ENCODE measurements at regions of chr7 and their contacts with region 1.

Region 1: DNA sequence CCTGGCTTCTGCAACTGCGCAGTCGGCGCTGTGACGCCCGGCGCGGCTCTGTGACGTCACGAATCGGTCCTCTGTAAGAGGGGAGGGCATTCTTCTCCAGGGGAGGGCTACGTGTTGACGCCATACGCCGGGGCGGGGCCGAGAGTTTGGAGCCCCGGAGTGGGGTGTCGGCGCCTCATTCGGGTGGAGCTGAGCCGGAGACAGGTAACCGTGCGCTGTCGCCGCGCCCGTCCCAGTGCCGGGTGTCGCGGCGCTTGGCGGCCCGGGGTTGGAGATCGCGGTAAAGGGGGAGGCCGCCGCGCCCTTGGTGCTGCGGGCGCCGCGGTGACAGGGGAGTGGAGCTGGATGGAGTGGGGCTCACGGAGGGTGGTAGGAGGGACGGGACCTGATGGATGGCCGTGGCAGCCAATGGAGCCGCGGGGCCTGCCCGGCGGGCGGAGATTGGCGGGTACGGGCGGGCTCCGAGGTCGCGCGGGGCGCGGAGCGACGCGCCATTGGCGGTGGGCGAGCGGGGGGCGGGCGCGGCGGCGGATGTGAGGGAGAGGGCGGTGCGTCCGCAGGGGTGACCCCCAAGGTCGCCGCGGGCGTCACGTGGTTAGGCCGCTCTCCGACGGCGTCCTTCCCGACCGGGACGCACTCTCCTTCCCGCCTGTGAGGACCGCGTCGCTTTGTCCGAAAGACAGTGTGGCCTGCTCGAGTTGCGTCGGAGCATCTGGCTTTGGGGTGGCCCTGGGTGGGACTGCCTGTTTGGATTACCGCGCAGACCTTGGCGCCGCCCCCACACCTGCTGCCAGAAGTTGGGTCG is at the start of gene OGDH:
- DNase-seq: peak; percentile 98 to 100 (median 99)
- ATAC-seq: peak; percentile 92
- H3K4me3 ChIP-seq: peak within 1 kb of the TSS; percentile 87 to 90
- H3K4me3 Mint-ChIP-seq: peak within 1 kb of the TSS; percentile 99
- H3K27ac ChIP-seq: peak within 1 kb of the TSS; percentile 96 to 98
- H3K27ac Mint-ChIP-seq: peak within 1 kb of the TSS; percentile 100
- H3K4me1 ChIP-seq: peaks cover 30% of the 10 kb centered on the region
- H3K4me1 Mint-ChIP-seq: peaks cover 34% of the 10 kb centered on the region
- H3K27me3 ChIP-seq: no peaks in the 10 kb centered on the region
- H3K27me3 Mint-ChIP-seq: no peaks in the 10 kb centered on the region
- CTCF ChIP-seq: no peak
- total RNA-seq, gene OGDH: 36.8 to 39.6 TPM

Region 2: DNA sequence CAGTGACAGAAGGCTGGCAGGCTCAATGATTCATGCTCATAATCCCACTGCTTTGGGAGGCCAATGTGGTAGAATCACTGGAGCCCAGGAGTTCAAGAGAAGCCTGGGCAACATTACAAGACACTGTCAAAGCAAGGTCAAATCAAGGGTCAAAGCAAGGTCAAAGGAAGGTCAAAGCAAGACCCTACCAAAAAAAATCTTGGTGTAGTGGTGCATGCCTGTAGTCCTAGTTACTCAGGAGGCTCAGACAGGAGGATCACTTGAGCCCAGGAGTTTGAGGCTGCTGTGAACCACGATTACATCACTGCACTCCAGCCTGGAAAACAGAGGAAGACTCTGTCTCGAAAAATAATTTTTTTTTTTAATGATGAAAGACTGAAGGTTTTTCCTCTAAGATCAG is 51.3 kb before region 1 on chr7:
- CTCF ChIA-PET with region 1: no interaction called
- POLR2A ChIA-PET with region 1: no interaction called
- intact Hi-C with region 1: no loop called
- DNase-seq: no peak
- ATAC-seq: no peak
- H3K4me3 ChIP-seq: no peak overlapping the region
- H3K4me3 Mint-ChIP-seq: no peak overlapping the region
- H3K27ac ChIP-seq: no peak overlapping the region
- H3K27ac Mint-ChIP-seq: no peak overlapping the region
- H3K4me1 ChIP-seq: no peaks in the 10 kb centered on the region
- H3K4me1 Mint-ChIP-seq: no peaks in the 10 kb centered on the region
- H3K27me3 ChIP-seq: no peaks in the 10 kb centered on the region
- H3K27me3 Mint-ChIP-seq: peaks cover 2% of the 10 kb centered on the region
- CTCF ChIP-seq: no peak

Region 3: DNA sequence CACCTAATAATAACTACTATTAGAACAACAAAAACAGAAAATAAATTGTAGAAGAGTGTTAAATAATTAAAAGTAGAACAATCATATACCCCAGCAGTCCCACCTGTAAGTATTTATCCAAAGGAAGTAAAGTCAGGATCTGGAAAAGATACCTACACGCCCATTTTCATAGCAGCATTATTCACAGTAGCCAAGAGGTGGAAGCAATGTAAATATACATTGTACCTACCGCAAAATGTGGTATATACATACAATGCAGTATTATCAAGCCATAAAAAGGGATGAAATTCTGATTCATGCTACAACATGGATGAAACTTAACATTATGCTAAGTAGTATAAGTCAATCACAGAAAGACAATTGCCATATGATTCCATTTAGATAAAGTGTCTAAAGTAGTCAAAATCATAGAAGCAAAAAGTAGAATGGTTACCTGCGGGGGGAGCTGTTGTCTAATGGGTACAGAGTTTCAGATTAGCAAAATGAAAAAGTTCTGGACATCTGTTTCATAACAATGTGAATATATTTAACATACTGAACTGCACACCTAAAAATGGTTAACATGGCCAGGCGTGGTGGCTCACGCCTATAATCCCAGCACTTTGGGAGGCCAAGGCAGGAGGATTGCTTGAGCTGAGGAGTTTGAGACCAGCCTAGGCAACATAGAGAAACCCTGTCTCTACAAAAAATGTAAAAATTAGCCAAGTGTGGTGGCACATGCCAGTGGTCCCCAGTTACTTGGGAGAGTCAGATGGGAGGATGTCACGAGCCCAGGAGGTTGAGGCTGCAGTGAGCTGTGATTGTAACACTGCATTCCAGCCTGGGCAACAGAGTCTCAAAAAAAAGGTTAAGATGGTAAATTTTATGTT is 18.6 kb before region 1 on chr7:
- CTCF ChIA-PET with region 1: interaction called, 4 read pairs
- POLR2A ChIA-PET with region 1: interaction called, 38 read pairs
- intact Hi-C with region 1: loop called (anchors 1 to 2 kb)
- DNase-seq: peak; percentile 34 to 79 (median 63)
- ATAC-seq: peak; percentile 81
- H3K4me3 ChIP-seq: no peak overlapping the region
- H3K4me3 Mint-ChIP-seq: no peak overlapping the region
- H3K27ac ChIP-seq: no peak overlapping the region
- H3K27ac Mint-ChIP-seq: no peak overlapping the region
- H3K4me1 ChIP-seq: no peaks in the 10 kb centered on the region
- H3K4me1 Mint-ChIP-seq: peaks cover 6% of the 10 kb centered on the region
- H3K27me3 ChIP-seq: no peaks in the 10 kb centered on the region
- H3K27me3 Mint-ChIP-seq: no peaks in the 10 kb centered on the region
- CTCF ChIP-seq: peak; percentile 68

Region 4: GRCh38 chr7:44638611-44639557 is 32.2 kb after region 1 on chr7:
- CTCF ChIA-PET with region 1: interaction called, 13 read pairs
- POLR2A ChIA-PET with region 1: interaction called, 50 read pairs
- intact Hi-C with region 1: loop called (anchors 1 kb)
- DNase-seq: peak; percentile 58 to 91 (median 82)
- ATAC-seq: peak; percentile 56
- H3K4me3 ChIP-seq: peak overlapping the region in 1 of 2 experiments; percentile 9
- H3K4me3 Mint-ChIP-seq: peak overlapping the region; percentile 75
- H3K27ac ChIP-seq: peak overlapping the region; percentile 73 to 97
- H3K27ac Mint-ChIP-seq: peak overlapping the region; percentile 99
- H3K4me1 ChIP-seq: peaks cover 59% of the 10 kb centered on the region
- H3K4me1 Mint-ChIP-seq: peaks cover 66% of the 10 kb centered on the region
- H3K27me3 ChIP-seq: no peaks in the 10 kb centered on the region
- H3K27me3 Mint-ChIP-seq: no peaks in the 10 kb centered on the region
- CTCF ChIP-seq: no peak

Region 5: DNA sequence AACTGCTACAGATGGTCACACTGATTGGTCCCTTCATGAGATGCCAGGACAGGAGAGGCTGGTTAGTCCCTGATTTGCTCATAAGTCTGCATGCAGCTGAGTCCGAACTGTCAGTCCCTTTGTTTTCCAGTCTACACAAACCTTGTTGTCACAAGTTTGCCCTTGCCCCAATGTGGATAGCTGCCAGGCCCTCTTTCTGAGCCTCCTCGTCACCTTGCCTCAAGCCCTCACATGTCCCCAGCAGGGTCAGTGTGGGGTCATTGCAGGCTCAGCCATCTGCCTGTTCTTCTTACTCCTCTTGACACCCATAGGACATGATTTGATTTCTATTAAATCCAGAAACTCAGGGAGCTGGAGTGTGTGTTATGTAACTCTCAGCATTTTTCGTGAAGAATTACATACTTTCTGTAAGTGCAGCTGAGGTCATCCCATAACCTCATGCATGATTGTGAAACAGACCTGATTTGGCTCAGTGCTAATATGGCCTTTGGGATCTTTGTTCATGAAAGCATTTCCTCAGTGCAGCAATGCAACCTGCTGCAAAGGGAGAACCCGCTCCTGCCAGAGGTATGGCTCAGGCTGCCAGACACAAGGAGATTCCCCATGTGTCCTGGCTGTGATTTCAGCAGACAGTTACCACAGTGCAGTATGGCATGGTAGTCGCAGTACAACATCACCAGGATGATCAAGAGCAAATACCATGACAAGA is 72.0 kb after region 1 on chr7:
- CTCF ChIA-PET with region 1: no interaction called
- POLR2A ChIA-PET with region 1: no interaction called
- intact Hi-C with region 1: no loop called
- DNase-seq: peak in 1 of 9 experiments; percentile 29
- ATAC-seq: no peak
- H3K4me3 ChIP-seq: no peak overlapping the region
- H3K4me3 Mint-ChIP-seq: no peak overlapping the region
- H3K27ac ChIP-seq: no peak overlapping the region
- H3K27ac Mint-ChIP-seq: peak overlapping the region; percentile 60
- H3K4me1 ChIP-seq: no peaks in the 10 kb centered on the region
- H3K4me1 Mint-ChIP-seq: no peaks in the 10 kb centered on the region
- H3K27me3 ChIP-seq: no peaks in the 10 kb centered on the region
- H3K27me3 Mint-ChIP-seq: no peaks in the 10 kb centered on the region
- CTCF ChIP-seq: no peak

Region 6: GRCh38 chr7:44797329-44798251 is 190.9 kb after region 1 on chr7:
- CTCF ChIA-PET with region 1: no interaction called
- POLR2A ChIA-PET with region 1: interaction called, 12 read pairs
- intact Hi-C with region 1: loop called (anchors 1 kb)
- DNase-seq: peak; percentile 64 to 92 (median 82)
- ATAC-seq: peak; percentile 61
- H3K4me3 ChIP-seq: peak overlapping the region; percentile 97 to 98
- H3K4me3 Mint-ChIP-seq: peak overlapping the region; percentile 92
- H3K27ac ChIP-seq: peak overlapping the region; percentile 97 to 99
- H3K27ac Mint-ChIP-seq: peak overlapping the region; percentile 96
- H3K4me1 ChIP-seq: peaks cover 22% of the 10 kb centered on the region
- H3K4me1 Mint-ChIP-seq: peaks cover 44% of the 10 kb centered on the region
- H3K27me3 ChIP-seq: no peaks in the 10 kb centered on the region
- H3K27me3 Mint-ChIP-seq: no peaks in the 10 kb centered on the region
- CTCF ChIP-seq: no peak

Region 7: DNA sequence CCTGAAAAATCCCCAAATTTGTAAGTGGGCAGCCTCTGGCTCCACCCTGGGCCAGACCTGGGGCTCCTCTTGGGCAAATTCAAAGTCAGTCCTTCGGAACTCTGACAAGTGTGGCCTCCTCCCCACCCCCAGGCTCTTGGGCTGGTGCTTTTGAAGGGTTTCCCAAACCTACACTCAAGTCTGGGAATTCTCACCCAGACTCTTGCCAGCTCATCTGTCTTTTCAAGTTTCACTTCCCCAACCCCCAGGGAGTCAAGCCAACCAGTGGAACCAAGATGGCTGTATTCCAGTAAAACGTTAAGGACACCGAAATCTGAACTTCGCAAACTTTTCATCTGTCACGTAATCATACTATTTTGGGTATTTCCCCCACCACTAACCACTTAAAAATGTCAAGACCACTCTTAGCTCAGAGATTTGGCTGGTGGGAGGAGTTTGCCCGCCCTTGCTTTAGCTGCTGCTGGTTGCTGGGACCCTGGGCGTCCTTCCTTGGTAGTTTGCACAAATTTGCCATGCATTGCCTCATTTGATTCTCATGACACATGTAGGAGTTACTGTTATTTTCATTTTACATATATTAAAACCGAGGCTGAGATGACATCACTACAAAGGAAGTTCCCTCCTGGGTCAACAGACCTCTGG is 373.9 kb after region 1 on chr7:
- CTCF ChIA-PET with region 1: no interaction called
- POLR2A ChIA-PET with region 1: no interaction called
- intact Hi-C with region 1: loop called in 1 of 2 experiments (anchors 2 kb)
- DNase-seq: peak in 6 of 9 experiments; percentile 40 to 95 (median 76)
- ATAC-seq: peak; percentile 43
- H3K4me3 ChIP-seq: no peak overlapping the region
- H3K4me3 Mint-ChIP-seq: peak overlapping the region; percentile 94
- H3K27ac ChIP-seq: peak overlapping the region; percentile 78 to 86
- H3K27ac Mint-ChIP-seq: peak overlapping the region; percentile 99
- H3K4me1 ChIP-seq: peaks cover 72% of the 10 kb centered on the region
- H3K4me1 Mint-ChIP-seq: peaks cover 80% of the 10 kb centered on the region
- H3K27me3 ChIP-seq: no peaks in the 10 kb centered on the region
- H3K27me3 Mint-ChIP-seq: no peaks in the 10 kb centered on the region
- CTCF ChIP-seq: no peak

Measured in CD8-positive, alpha-beta T cell (primary cell).